T-cell (primary cell): ENCODE measurements at regions of chr2 and their contacts with region 1.

Region 1: DNA sequence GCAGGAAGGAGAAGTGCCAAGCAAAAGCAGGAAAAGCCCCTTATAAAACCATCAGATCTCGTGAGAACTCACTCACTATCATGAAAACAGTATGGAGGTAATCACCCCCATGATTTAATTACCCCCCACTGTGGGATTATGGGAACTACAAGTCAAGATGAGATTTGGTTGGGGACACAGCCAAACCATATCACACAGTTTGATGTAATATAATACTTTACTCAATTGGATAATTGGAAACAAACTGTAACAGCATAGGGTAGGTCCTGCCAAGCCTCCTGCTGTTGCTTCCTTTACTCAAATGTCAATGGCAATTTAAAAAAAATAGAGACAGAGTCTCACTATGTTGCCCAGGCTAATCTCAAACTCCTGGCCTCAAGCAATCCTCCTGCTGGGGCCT is 15.5 kb upstream of the METTL21A start:
- DNase-seq: no peak
- ATAC-seq: no peak
- H3K4me3 ChIP-seq: no peak overlapping the region
- H3K4me3 Mint-ChIP-seq: no peak overlapping the region
- H3K27ac ChIP-seq: no peak overlapping the region
- H3K27ac Mint-ChIP-seq: no peak overlapping the region
- H3K4me1 ChIP-seq: no peaks in the 10 kb centered on the region
- H3K4me1 Mint-ChIP-seq: no peaks in the 10 kb centered on the region
- H3K27me3 ChIP-seq: peaks cover 0 to 5% of the 10 kb centered on the region in 2 experiments
- H3K27me3 Mint-ChIP-seq: peaks cover 4 to 10% of the 10 kb centered on the region in 2 donors

Region 2: DNA sequence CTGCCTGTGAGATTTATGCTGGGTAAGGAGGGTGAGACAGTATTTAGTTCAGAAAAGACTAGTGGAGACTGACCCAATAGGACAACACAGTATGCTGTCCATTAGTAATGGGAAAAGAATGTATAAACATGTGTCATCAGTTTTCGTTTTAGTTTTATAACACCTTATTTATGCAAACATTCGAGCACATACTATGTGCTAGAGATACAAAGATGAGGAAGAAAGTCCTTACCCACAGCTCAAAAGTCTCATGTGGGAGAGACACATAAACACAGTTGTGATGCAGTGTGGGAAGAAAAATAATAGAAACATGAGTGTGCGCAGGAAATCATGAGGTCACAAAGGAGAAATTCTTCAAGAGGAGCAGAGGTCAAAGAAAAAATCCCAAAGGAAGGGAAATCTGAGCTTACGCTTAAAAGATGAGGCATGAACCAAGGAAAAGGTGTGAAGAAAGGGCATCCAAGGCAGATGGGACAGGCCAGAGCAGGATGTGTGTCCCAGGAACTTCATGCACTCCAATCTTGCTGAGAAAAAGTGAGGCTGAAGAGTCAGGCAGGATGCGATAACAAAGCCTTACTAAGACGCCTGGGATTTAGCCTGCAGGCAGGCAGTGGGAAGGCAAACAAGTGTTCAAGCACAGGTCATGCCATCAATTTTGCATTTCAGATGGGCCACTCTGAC is 23.5 kb before region 1 on chr2:
- CTCF ChIA-PET with region 1: no interaction called
- POLR2A ChIA-PET with region 1: no interaction called
- DNase-seq: no peak
- ATAC-seq: no peak
- H3K4me3 ChIP-seq: no peak overlapping the region
- H3K4me3 Mint-ChIP-seq: no peak overlapping the region
- H3K27ac ChIP-seq: no peak overlapping the region
- H3K27ac Mint-ChIP-seq: peak overlapping the region in 1 of 2 donors; percentile 24
- H3K4me1 ChIP-seq: peaks cover 9 to 15% of the 10 kb centered on the region in 2 experiments
- H3K4me1 Mint-ChIP-seq: peaks cover 27 to 34% (median 27%) of the 10 kb centered on the region in 3 donors
- H3K27me3 ChIP-seq: no peaks in the 10 kb centered on the region
- H3K27me3 Mint-ChIP-seq: no peaks in the 10 kb centered on the region

Region 3: DNA sequence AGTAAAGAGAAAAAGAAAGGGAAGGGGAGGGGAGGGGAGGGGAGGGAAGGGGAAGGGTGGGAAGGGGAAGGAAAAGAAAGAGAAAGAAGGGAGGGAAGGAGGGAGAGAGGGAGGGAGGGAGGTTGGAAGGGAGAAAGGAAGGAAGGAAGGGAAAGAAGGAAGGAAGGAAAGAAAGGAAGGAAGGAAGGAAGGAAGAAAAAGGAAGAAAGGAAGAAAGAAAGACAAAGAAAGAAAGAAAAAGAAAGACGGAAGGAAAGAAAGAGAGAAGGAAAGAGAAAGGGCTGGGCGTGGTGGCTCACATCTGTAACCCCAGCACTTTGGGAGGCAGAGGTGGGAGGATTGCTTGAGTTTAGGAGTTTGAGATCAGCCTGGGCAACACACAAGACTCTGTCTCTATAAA is 46.2 kb after region 1 on chr2:
- CTCF ChIA-PET with region 1: interaction called in 1 of 2 experiments, 10 read pairs
- POLR2A ChIA-PET with region 1: no interaction called
- DNase-seq: no peak
- ATAC-seq: no peak
- H3K4me3 ChIP-seq: no peak overlapping the region
- H3K4me3 Mint-ChIP-seq: no peak overlapping the region
- H3K27ac ChIP-seq: no peak overlapping the region
- H3K27ac Mint-ChIP-seq: no peak overlapping the region
- H3K4me1 ChIP-seq: no peaks in the 10 kb centered on the region
- H3K4me1 Mint-ChIP-seq: no peaks in the 10 kb centered on the region
- H3K27me3 ChIP-seq: peaks cover 0 to 9% of the 10 kb centered on the region in 2 experiments
- H3K27me3 Mint-ChIP-seq: peaks cover 0 to 3% of the 10 kb centered on the region in 2 donors